ENCODE measurements at regions of chr17 and their contacts with region 1.

Region 1: GRCh38 chr17:82320956-82321927 is 3.8 kb upstream of the CD7 start:
- DNase-seq: peak; percentile 57
- H3K4me3 Mint-ChIP-seq: peak overlapping the region; percentile 88
- H3K27ac Mint-ChIP-seq: peak overlapping the region; percentile 98
- H3K4me1 Mint-ChIP-seq: peaks cover 29% of the 10 kb centered on the region
- H3K27me3 Mint-ChIP-seq: no peaks in the 10 kb centered on the region

Region 2: DNA sequence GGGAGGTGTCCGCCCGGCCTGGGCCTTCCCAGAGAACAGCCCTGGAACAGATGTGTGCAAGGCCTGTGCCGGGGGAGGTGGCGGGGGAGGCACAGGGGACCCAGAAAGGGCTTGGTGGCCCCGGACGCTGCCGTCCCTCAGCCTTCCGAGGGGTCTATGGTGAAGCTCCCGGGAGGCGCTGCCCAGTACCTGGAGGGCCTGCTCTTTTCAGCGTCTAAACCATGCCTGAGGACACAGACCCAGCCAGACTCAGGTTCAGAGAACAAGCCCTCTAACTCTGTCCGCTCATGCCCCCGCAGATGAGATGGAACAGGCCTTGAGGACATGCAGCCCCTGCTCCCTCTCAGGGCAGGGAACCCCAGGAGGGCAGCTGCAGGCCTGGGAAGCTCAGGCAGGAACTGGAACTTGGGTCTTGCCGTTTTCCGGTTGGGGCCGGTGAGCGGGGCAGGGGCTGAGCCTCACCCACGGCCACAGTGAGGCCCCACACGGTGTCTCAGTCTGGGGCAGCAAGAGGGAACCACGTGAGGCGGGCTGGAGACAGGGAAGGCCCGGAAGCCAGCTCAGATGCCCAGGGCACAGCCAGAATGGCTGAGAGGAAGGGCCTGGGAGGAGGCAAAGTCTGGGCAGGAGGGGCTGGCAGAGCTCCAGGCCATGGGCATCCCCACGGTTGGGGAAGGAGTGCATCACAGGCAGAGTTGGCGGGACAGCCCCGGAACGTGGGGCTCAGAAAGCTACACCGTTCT is 79.9 kb before region 1 on chr17:
- intact Hi-C with region 1: loop called (anchors 5 kb)
- DNase-seq: no peak
- H3K4me3 Mint-ChIP-seq: no peak overlapping the region
- H3K27ac Mint-ChIP-seq: peak overlapping the region; percentile 70
- H3K4me1 Mint-ChIP-seq: peaks cover 17% of the 10 kb centered on the region
- H3K27me3 Mint-ChIP-seq: no peaks in the 10 kb centered on the region

Region 3: GRCh38 chr17:82273327-82274133 is 47.7 kb before region 1 on chr17 and contains the start of gene CSNK1D:
- intact Hi-C with region 1: loop called (anchors 1 kb)
- DNase-seq: peak; percentile 87
- H3K4me3 Mint-ChIP-seq: peak within 1 kb of the TSS; percentile 90
- H3K27ac Mint-ChIP-seq: peak within 1 kb of the TSS; percentile 100
- H3K4me1 Mint-ChIP-seq: peaks cover 29% of the 10 kb centered on the region
- H3K27me3 Mint-ChIP-seq: no peaks in the 10 kb centered on the region
- total RNA-seq, gene CSNK1D: 139 and 151 TPM in 2 replicates

Region 4: DNA sequence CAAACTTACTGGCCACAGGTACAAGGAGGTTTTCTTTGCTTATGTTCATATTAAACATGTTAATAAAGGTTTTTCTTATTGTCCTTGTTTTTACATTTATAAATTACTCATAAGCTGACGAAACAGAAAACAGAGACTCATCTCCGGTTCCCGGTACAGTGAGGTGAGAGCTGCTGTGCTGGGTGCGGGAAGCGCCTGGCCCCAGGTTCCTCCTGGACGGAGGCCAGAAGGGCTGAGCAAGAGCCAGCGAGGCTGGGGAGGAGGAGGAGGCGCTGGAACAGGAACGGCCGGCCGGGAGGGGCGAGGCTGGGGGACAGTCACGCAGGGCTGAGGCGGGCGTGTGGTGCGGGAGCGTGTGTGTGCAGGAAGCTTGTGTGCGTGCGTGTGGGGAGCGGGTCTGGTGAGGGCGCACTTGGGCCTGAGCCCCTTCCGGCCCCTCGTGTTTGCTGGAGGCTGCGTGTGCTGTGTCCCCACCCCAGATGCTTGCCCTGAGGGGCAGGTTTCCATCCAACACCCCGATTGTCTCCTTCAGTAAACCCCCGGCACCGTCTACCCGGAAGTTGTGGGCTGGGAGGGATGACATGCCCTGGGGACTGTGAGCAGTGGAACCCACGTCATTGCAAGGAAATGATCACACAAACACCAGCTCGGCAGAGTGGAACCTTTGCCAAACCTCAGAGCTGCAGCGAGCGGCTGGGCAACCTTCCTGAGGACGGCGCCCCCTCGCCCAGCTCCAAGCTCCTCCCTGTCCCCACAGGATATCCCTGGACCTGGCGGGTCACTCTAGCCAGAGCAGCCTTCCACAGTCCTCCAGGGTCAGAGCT is 23.3 kb before region 1 on chr17:
- intact Hi-C with region 1: loop called (anchors 1 kb)
- DNase-seq: peak; percentile 89
- H3K4me3 Mint-ChIP-seq: peak overlapping the region; percentile 89
- H3K27ac Mint-ChIP-seq: peak overlapping the region; percentile 100
- H3K4me1 Mint-ChIP-seq: peaks cover 62% of the 10 kb centered on the region
- H3K27me3 Mint-ChIP-seq: no peaks in the 10 kb centered on the region